ENCODE measurements at regions of chr21 and their contacts with region 1.

Region 1: GRCh38 chr21:35940074-35940927 is 120.0 kb downstream of the SETD4 start:
- DNase-seq: peak; percentile 74
- H3K4me3 Mint-ChIP-seq: no peak overlapping the region
- H3K27ac Mint-ChIP-seq: no peak overlapping the region
- H3K4me1 Mint-ChIP-seq: no peaks in the 10 kb centered on the region
- H3K27me3 Mint-ChIP-seq: no peaks in the 10 kb centered on the region
- CTCF ChIP-seq: peak; percentile 66

Region 2: GRCh38 chr21:36028127-36029069 is 88.1 kb after region 1 on chr21:
- CTCF ChIA-PET with region 1: interaction called, 3 read pairs
- POLR2A ChIA-PET with region 1: no interaction called
- intact Hi-C with region 1: loop called (anchors 1 kb)
- DNase-seq: peak; percentile 70
- H3K4me3 Mint-ChIP-seq: no peak overlapping the region
- H3K27ac Mint-ChIP-seq: no peak overlapping the region
- H3K4me1 Mint-ChIP-seq: peaks cover 7% of the 10 kb centered on the region
- H3K27me3 Mint-ChIP-seq: no peaks in the 10 kb centered on the region
- CTCF ChIP-seq: peak; percentile 93